ENCODE measurements at regions of chr14 and their contacts with region 1.

Region 1: DNA sequence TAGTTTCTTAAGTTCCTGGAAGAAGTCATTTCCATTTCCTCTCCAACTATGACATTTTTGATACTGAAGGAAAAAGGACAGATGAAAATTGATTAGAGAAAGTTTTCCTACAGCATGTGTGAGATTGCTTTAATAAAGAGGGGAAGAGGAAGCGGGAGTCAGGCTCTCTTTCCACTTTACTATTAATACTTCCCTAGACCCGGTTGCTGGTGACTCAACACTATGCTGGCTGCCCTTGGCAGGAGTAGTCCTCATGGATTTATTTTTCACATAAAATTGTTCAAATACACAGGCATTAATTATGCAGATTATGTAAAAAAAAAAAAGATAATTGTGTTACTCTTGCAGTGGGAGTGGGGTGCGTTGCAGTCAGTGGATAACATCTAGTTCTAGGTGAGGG is 293.4 kb downstream of the EGLN3 start:
- DNase-seq: no peak
- ATAC-seq: no peak
- H3K4me3 ChIP-seq: no peak overlapping the region
- H3K27ac ChIP-seq: no peak overlapping the region
- H3K4me1 ChIP-seq: no peaks in the 10 kb centered on the region
- H3K27me3 ChIP-seq: no peaks in the 10 kb centered on the region
- CTCF ChIP-seq: no peak
- EP300 ChIP-seq: no peak
- POLR2A ChIP-seq: no peak
- RAD21 ChIP-seq: no peak

Region 2: DNA sequence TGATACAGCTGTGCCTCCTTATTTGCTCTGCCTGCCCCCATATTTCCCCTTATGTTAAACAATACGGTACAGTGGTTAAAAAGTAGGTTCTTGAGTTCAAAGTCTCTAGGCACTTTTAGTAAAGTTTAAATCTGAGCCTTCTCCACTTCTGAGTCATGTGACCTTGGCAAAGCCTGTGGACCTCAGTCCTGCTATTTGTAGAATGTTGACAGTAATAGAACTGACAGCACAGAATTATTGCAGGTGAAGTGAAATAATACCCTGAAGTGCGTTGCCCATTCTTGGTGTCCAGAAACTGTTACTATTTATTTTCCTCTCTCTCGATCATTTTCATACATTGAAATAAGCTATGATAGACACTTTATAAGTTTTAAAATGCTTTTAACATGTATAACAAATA is 206.3 kb before region 1 on chr14:
- CTCF ChIA-PET with region 1: no interaction called
- POLR2A ChIA-PET with region 1: no interaction called
- RAD21 ChIA-PET with region 1: no interaction called
- SMC1A ChIA-PET with region 1: no interaction called
- in situ Hi-C with region 1: no loop called
- intact Hi-C with region 1: no loop called
- DNase-seq: no peak
- ATAC-seq: no peak
- H3K4me3 ChIP-seq: no peak overlapping the region
- H3K27ac ChIP-seq: no peak overlapping the region
- H3K4me1 ChIP-seq: no peaks in the 10 kb centered on the region
- H3K27me3 ChIP-seq: no peaks in the 10 kb centered on the region
- CTCF ChIP-seq: no peak
- EP300 ChIP-seq: no peak
- POLR2A ChIP-seq: no peak
- RAD21 ChIP-seq: no peak

Region 3: GRCh38 chr14:33534632-33535031 is 122.8 kb before region 1 on chr14:
- CTCF ChIA-PET with region 1: interaction called, 4 read pairs
- POLR2A ChIA-PET with region 1: interaction called, 4 read pairs
- RAD21 ChIA-PET with region 1: interaction called, 3 read pairs
- SMC1A ChIA-PET with region 1: interaction called, 11 read pairs
- in situ Hi-C with region 1: no loop called
- intact Hi-C with region 1: no loop called
- DNase-seq: no peak
- ATAC-seq: no peak
- H3K4me3 ChIP-seq: no peak overlapping the region
- H3K27ac ChIP-seq: no peak overlapping the region
- H3K4me1 ChIP-seq: no peaks in the 10 kb centered on the region
- H3K27me3 ChIP-seq: no peaks in the 10 kb centered on the region
- CTCF ChIP-seq: no peak
- EP300 ChIP-seq: no peak
- POLR2A ChIP-seq: no peak
- RAD21 ChIP-seq: no peak

Region 4: GRCh38 chr14:33611405-33612209 is 45.9 kb before region 1 on chr14:
- CTCF ChIA-PET with region 1: interaction called, 3 read pairs
- POLR2A ChIA-PET with region 1: interaction called, 4 read pairs
- RAD21 ChIA-PET with region 1: interaction called, 9 read pairs
- SMC1A ChIA-PET with region 1: interaction called, 25 read pairs
- in situ Hi-C with region 1: no loop called
- intact Hi-C with region 1: no loop called
- DNase-seq: no peak
- ATAC-seq: peak; percentile 29; the same call in 1 of the 3 replicates
- H3K4me3 ChIP-seq: no peak overlapping the region
- H3K27ac ChIP-seq: no peak overlapping the region
- H3K4me1 ChIP-seq: no peaks in the 10 kb centered on the region
- H3K27me3 ChIP-seq: no peaks in the 10 kb centered on the region
- CTCF ChIP-seq: no peak
- EP300 ChIP-seq: no peak
- POLR2A ChIP-seq: no peak
- RAD21 ChIP-seq: no peak

Region 5: DNA sequence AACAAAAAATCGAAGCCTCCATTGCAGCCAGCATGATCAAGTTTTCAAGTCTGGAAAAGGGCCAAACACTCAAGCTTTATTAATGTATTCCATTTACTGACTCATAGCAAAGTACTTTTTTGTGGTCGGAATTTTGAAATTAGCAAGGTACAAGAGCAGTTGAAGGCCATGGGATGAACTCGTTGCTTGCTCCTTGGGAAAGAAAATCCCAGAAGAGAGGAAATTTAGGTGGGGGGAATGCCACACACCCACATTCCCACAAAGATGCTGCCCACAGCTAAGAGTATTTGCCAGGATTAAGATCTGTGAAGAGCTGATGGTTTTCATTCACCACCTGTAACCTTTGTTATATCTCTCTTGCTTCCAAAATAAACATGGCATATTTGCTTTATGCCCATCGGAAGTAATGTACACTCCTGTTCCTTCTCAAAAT is 40.3 kb before region 1 on chr14:
- CTCF ChIA-PET with region 1: no interaction called
- POLR2A ChIA-PET with region 1: no interaction called
- RAD21 ChIA-PET with region 1: interaction called, 5 read pairs
- SMC1A ChIA-PET with region 1: interaction called, 25 read pairs
- in situ Hi-C with region 1: no loop called
- intact Hi-C with region 1: no loop called
- DNase-seq: no peak
- ATAC-seq: no peak
- H3K4me3 ChIP-seq: no peak overlapping the region
- H3K27ac ChIP-seq: no peak overlapping the region
- H3K4me1 ChIP-seq: no peaks in the 10 kb centered on the region
- H3K27me3 ChIP-seq: no peaks in the 10 kb centered on the region
- CTCF ChIP-seq: no peak
- EP300 ChIP-seq: no peak
- POLR2A ChIP-seq: no peak
- RAD21 ChIP-seq: no peak

Region 6: DNA sequence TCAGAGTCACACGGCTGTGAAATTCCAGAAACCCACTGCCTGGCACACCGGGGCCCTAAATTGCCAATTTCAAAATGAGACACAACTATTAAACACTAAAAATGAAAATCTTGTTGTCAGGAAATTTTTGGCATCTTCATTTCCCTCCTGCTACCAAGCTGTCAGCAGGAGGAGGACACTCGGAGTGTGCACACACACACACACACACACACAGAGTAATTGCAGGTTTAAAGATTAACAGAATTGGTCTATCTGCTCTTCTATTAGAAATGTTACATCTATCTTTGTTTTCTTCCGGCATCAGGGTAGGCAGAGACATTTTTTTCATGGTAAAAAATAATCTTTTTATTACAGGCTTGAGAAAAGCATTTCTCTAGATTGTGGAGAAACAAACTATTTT is 20.8 kb before region 1 on chr14:
- CTCF ChIA-PET with region 1: interaction called, 4 read pairs
- POLR2A ChIA-PET with region 1: interaction called, 4 read pairs
- RAD21 ChIA-PET with region 1: interaction called, 5 read pairs
- SMC1A ChIA-PET with region 1: interaction called, 30 read pairs
- in situ Hi-C with region 1: no loop called
- intact Hi-C with region 1: no loop called
- DNase-seq: no peak
- ATAC-seq: no peak
- H3K4me3 ChIP-seq: no peak overlapping the region
- H3K27ac ChIP-seq: no peak overlapping the region
- H3K4me1 ChIP-seq: no peaks in the 10 kb centered on the region
- H3K27me3 ChIP-seq: no peaks in the 10 kb centered on the region
- CTCF ChIP-seq: no peak
- EP300 ChIP-seq: no peak
- POLR2A ChIP-seq: no peak
- RAD21 ChIP-seq: no peak

Region 7: GRCh38 chr14:33647385-33647786 is 10.1 kb before region 1 on chr14:
- CTCF ChIA-PET with region 1: interaction called, 4 read pairs
- POLR2A ChIA-PET with region 1: interaction called, 13 read pairs
- RAD21 ChIA-PET with region 1: interaction called, 5 read pairs
- SMC1A ChIA-PET with region 1: interaction called, 38 read pairs
- in situ Hi-C with region 1: no loop called
- intact Hi-C with region 1: no loop called
- DNase-seq: no peak
- ATAC-seq: no peak
- H3K4me3 ChIP-seq: no peak overlapping the region
- H3K27ac ChIP-seq: no peak overlapping the region
- H3K4me1 ChIP-seq: no peaks in the 10 kb centered on the region
- H3K27me3 ChIP-seq: no peaks in the 10 kb centered on the region
- CTCF ChIP-seq: no peak
- EP300 ChIP-seq: no peak
- POLR2A ChIP-seq: no peak
- RAD21 ChIP-seq: no peak

Region 8: GRCh38 chr14:33668066-33668465 is 10.6 kb after region 1 on chr14:
- CTCF ChIA-PET with region 1: interaction called, 5 read pairs
- POLR2A ChIA-PET with region 1: interaction called, 4 read pairs
- RAD21 ChIA-PET with region 1: interaction called, 97 read pairs
- SMC1A ChIA-PET with region 1: interaction called, 96 read pairs
- in situ Hi-C with region 1: no loop called
- intact Hi-C with region 1: no loop called
- DNase-seq: no peak
- ATAC-seq: no peak
- H3K4me3 ChIP-seq: no peak overlapping the region
- H3K27ac ChIP-seq: no peak overlapping the region
- H3K4me1 ChIP-seq: no peaks in the 10 kb centered on the region
- H3K27me3 ChIP-seq: no peaks in the 10 kb centered on the region
- CTCF ChIP-seq: no peak
- EP300 ChIP-seq: no peak
- POLR2A ChIP-seq: no peak
- RAD21 ChIP-seq: no peak

Measured in GM12878 (cell line).